ENCODE measurements at regions of chr1 and their contacts with region 1.

Region 1: GRCh38 chr1:172745014-172745413 is 86.1 kb downstream of the FASLG start:
- DNase-seq: peak; percentile 56
- ATAC-seq: peak; percentile 85
- H3K4me3 Mint-ChIP-seq: no peak overlapping the region
- H3K27ac Mint-ChIP-seq: no peak overlapping the region
- H3K4me1 Mint-ChIP-seq: peaks cover 37% of the 10 kb centered on the region
- H3K27me3 Mint-ChIP-seq: peaks cover 9% of the 10 kb centered on the region
- CTCF ChIP-seq: peak; percentile 74

Region 2: GRCh38 chr1:172298146-172298545 is 446.9 kb before region 1 on chr1:
- CTCF ChIA-PET with region 1: no interaction called
- POLR2A ChIA-PET with region 1: no interaction called
- intact Hi-C with region 1: no loop called
- DNase-seq: no peak
- ATAC-seq: no peak
- H3K4me3 Mint-ChIP-seq: no peak overlapping the region
- H3K27ac Mint-ChIP-seq: no peak overlapping the region
- H3K4me1 Mint-ChIP-seq: peaks cover 2% of the 10 kb centered on the region
- H3K27me3 Mint-ChIP-seq: no peaks in the 10 kb centered on the region
- CTCF ChIP-seq: no peak

Region 3: DNA sequence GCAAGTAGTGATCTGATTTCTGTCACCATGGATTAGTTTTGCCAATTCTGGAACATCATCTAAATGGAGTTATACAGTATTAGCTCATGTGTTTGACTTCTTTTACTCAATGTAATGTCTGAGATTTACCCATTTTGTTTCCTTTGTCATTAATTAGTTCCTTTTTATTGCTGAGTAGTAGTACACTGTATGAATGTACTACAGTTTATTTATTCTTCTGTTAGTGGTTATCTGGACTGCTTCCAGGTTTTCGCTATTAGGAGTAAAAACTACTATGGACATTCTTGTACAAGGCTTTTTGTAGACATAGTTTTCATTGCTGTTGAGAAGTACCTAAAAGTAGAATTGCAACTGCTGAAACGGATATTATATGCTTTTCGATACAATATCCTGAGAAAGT is 197.9 kb before region 1 on chr1:
- CTCF ChIA-PET with region 1: no interaction called
- POLR2A ChIA-PET with region 1: no interaction called
- intact Hi-C with region 1: no loop called
- DNase-seq: no peak
- ATAC-seq: no peak
- H3K4me3 Mint-ChIP-seq: no peak overlapping the region
- H3K27ac Mint-ChIP-seq: no peak overlapping the region
- H3K4me1 Mint-ChIP-seq: peaks cover 29% of the 10 kb centered on the region
- H3K27me3 Mint-ChIP-seq: no peaks in the 10 kb centered on the region
- CTCF ChIP-seq: no peak

Region 4: GRCh38 chr1:172699111-172699510 is 45.9 kb before region 1 on chr1:
- CTCF ChIA-PET with region 1: no interaction called
- POLR2A ChIA-PET with region 1: no interaction called
- intact Hi-C with region 1: no loop called
- DNase-seq: peak; percentile 87
- ATAC-seq: peak; percentile 80
- H3K4me3 Mint-ChIP-seq: peak overlapping the region; percentile 50
- H3K27ac Mint-ChIP-seq: peak overlapping the region; percentile 95
- H3K4me1 Mint-ChIP-seq: peaks cover 54% of the 10 kb centered on the region
- H3K27me3 Mint-ChIP-seq: no peaks in the 10 kb centered on the region
- CTCF ChIP-seq: no peak

Region 5: GRCh38 chr1:172778456-172779455 is 33.7 kb after region 1 on chr1:
- CTCF ChIA-PET with region 1: interaction called, 43 read pairs
- POLR2A ChIA-PET with region 1: no interaction called
- intact Hi-C with region 1: no loop called
- DNase-seq: no peak
- ATAC-seq: peak; percentile 91
- H3K4me3 Mint-ChIP-seq: peak overlapping the region; percentile 24
- H3K27ac Mint-ChIP-seq: peak overlapping the region; percentile 44
- H3K4me1 Mint-ChIP-seq: peaks cover 28% of the 10 kb centered on the region
- H3K27me3 Mint-ChIP-seq: no peaks in the 10 kb centered on the region
- CTCF ChIP-seq: peak; percentile 52

Region 6: GRCh38 chr1:172837816-172838680 is 93.0 kb after region 1 on chr1:
- CTCF ChIA-PET with region 1: interaction called, 15 read pairs
- POLR2A ChIA-PET with region 1: no interaction called
- intact Hi-C with region 1: loop called (anchors 5 kb)
- DNase-seq: peak; percentile 41
- ATAC-seq: peak; percentile 97
- H3K4me3 Mint-ChIP-seq: no peak overlapping the region
- H3K27ac Mint-ChIP-seq: no peak overlapping the region
- H3K4me1 Mint-ChIP-seq: peaks cover 34% of the 10 kb centered on the region
- H3K27me3 Mint-ChIP-seq: peaks cover 18% of the 10 kb centered on the region
- CTCF ChIP-seq: no peak

Region 7: GRCh38 chr1:173112129-173112528 is 367.1 kb after region 1 on chr1:
- CTCF ChIA-PET with region 1: interaction called, 4 read pairs
- POLR2A ChIA-PET with region 1: no interaction called
- intact Hi-C with region 1: loop called (anchors 10 kb)
- DNase-seq: no peak
- ATAC-seq: no peak
- H3K4me3 Mint-ChIP-seq: no peak overlapping the region
- H3K27ac Mint-ChIP-seq: no peak overlapping the region
- H3K4me1 Mint-ChIP-seq: no peaks in the 10 kb centered on the region
- H3K27me3 Mint-ChIP-seq: no peaks in the 10 kb centered on the region
- CTCF ChIP-seq: no peak

Region 8: DNA sequence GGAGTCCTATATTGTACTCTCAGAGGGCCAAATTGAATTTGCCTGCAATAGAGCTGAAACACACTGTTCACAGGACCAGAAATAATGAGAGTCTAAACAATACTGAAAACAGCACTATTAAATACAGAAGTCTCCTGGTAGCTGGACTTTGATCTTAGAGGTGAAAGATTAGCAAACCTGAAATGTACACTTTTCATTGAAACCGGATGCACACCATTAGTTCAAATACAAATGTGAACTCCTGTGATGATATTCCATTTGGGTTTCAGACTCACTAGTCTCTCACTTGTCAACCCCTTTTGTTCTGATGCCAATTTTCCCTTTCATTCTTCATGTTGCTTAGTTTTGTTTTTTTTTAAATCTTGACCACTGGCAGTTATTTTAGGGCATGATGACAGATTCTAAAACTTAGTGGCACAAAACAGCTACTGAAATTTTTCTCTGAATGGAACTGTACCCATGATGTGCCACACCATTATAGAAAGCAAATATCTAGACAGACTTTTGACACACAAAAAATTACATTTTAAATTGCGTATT is 468.0 kb after region 1 on chr1:
- CTCF ChIA-PET with region 1: interaction called, 192 read pairs
- POLR2A ChIA-PET with region 1: no interaction called
- intact Hi-C with region 1: no loop called
- DNase-seq: no peak
- ATAC-seq: peak; percentile 34
- H3K4me3 Mint-ChIP-seq: no peak overlapping the region
- H3K27ac Mint-ChIP-seq: peak overlapping the region; percentile 25
- H3K4me1 Mint-ChIP-seq: peaks cover 21% of the 10 kb centered on the region
- H3K27me3 Mint-ChIP-seq: peaks cover 6% of the 10 kb centered on the region
- CTCF ChIP-seq: no peak

Region 9: GRCh38 chr1:173429471-173430402 is 684.7 kb after region 1 on chr1:
- CTCF ChIA-PET with region 1: interaction called, 10 read pairs
- POLR2A ChIA-PET with region 1: no interaction called
- intact Hi-C with region 1: no loop called
- DNase-seq: peak; percentile 84
- ATAC-seq: peak; percentile 85
- H3K4me3 Mint-ChIP-seq: peak overlapping the region; percentile 62
- H3K27ac Mint-ChIP-seq: peak overlapping the region; percentile 86
- H3K4me1 Mint-ChIP-seq: peaks cover 25% of the 10 kb centered on the region
- H3K27me3 Mint-ChIP-seq: no peaks in the 10 kb centered on the region
- CTCF ChIP-seq: peak; percentile 88